Mammary epithelial cell (primary cell): ENCODE measurements at regions of chr10 and their contacts with region 1.

Region 1: GRCh38 chr10:110871298-110872084 is at the start of gene PDCD4:
- DNase-seq: peak; percentile 96
- H3K4me3 ChIP-seq: peak within 1 kb of the TSS; percentile 85 to 93 (median 92)
- H3K27ac ChIP-seq: peak within 1 kb of the TSS; percentile 88
- H3K4me1 ChIP-seq: peaks cover 4% of the 10 kb centered on the region
- H3K27me3 ChIP-seq: no peaks in the 10 kb centered on the region
- CTCF ChIP-seq: no peak
- total RNA-seq, gene PDCD4: 123 to 133 TPM

Region 2: GRCh38 chr10:110304780-110305421 is 566.6 kb before region 1 on chr10 and contains the start of gene SMNDC1:
- CTCF ChIA-PET with region 1: interaction called, 3 read pairs
- dilution Hi-C with region 1: no loop called
- in situ Hi-C with region 1: loop called in 1 of 2 experiments (anchors 25 kb)
- intact Hi-C with region 1: loop called (anchors 5 kb)
- DNase-seq: peak; percentile 96
- H3K4me3 ChIP-seq: peak within 1 kb of the TSS; percentile 69 to 97 (median 95)
- H3K27ac ChIP-seq: peak within 1 kb of the TSS; percentile 86
- H3K4me1 ChIP-seq: peaks cover 19% of the 10 kb centered on the region
- H3K27me3 ChIP-seq: no peaks in the 10 kb centered on the region
- CTCF ChIP-seq: no peak
- total RNA-seq, gene SMNDC1: 6.5 to 42.8 TPM

Region 3: GRCh38 chr10:110497438-110498086 is 373.9 kb before region 1 on chr10 and contains the start of gene DUSP5:
- CTCF ChIA-PET with region 1: no interaction called
- dilution Hi-C with region 1: no loop called
- in situ Hi-C with region 1: no loop called
- intact Hi-C with region 1: loop called (anchors 10 kb)
- DNase-seq: peak; percentile 96
- H3K4me3 ChIP-seq: peak within 1 kb of the TSS; percentile 80 to 90 (median 82)
- H3K27ac ChIP-seq: peak within 1 kb of the TSS; percentile 92
- H3K4me1 ChIP-seq: peaks cover 49% of the 10 kb centered on the region
- H3K27me3 ChIP-seq: no peaks in the 10 kb centered on the region
- CTCF ChIP-seq: no peak
- total RNA-seq, gene DUSP5: 18.0 to 107 TPM

Region 4: DNA sequence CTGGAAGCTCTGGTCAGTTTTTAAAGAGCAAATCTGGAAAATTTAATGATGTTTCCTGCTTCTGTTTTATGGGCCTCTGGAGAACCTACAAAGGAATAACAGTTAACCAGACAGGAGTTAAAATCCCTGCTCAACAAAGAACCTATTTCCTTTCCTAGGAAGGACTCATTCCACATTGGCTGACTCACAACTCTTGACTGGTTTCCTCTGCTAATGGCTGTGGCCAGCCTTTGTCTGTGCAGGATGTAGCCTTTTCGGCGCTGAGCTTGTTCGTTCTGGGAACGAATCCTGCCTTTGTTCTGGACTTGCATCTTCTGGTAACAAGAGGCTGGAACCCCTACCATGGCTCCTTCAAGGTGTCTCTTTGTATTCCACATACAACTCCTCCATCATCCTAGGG is 112.6 kb before region 1 on chr10:
- CTCF ChIA-PET with region 1: no interaction called
- dilution Hi-C with region 1: no loop called
- in situ Hi-C with region 1: loop called in 1 of 2 experiments (anchors 10 kb)
- intact Hi-C with region 1: no loop called
- DNase-seq: peak; percentile 57
- H3K4me3 ChIP-seq: no peak overlapping the region
- H3K27ac ChIP-seq: no peak overlapping the region
- H3K4me1 ChIP-seq: peaks cover 13% of the 10 kb centered on the region
- H3K27me3 ChIP-seq: no peaks in the 10 kb centered on the region
- CTCF ChIP-seq: no peak

Region 5: DNA sequence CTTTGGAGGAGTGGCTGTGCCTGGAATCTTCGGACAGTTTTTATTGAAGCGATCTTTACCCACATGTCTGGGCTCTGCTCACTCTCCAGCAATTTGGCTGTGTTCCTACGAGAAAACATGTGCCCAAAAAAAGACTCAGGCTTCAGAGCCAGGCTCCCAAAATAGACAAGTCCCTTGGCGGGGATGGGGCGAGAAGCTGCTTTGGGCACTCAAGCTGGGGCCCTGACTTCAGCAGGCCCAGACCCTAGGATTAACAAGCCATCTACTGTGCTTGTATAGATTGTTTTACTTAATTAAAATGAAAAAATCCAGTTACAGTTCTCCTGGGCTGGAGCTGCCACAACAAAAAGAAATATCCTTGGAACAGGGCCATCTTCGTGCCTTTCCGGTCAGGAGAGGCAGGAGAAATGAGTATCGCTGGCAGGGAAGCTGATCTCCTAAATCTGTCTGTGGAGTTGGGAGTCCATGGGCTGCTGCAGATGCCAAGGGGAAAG is 51.1 kb before region 1 on chr10:
- CTCF ChIA-PET with region 1: no interaction called
- dilution Hi-C with region 1: no loop called
- in situ Hi-C with region 1: no loop called
- intact Hi-C with region 1: loop called (anchors 5 kb)
- DNase-seq: no peak
- H3K4me3 ChIP-seq: no peak overlapping the region
- H3K27ac ChIP-seq: no peak overlapping the region
- H3K4me1 ChIP-seq: no peaks in the 10 kb centered on the region
- H3K27me3 ChIP-seq: no peaks in the 10 kb centered on the region
- CTCF ChIP-seq: no peak

Region 6: DNA sequence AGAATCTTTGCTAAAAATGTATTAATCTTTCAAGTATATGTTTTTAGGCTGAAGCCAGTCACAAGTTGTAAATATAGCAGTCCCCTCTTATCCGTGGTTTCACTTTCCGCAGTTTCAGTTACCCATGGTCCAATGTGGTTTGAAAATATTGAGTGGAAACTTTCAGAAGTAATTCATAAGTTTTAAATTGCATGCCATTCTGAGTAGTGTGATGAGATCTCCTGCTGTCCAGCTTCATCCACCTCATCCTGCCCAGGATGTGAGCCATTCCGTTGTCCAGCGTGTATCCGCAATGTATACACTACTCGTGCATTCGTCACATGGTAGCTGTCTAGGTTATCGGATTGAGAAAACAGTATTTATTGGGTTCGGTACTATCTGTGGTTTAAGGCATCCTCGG is 12.4 kb after region 1 on chr10:
- CTCF ChIA-PET with region 1: no interaction called
- dilution Hi-C with region 1: no loop called
- in situ Hi-C with region 1: no loop called
- intact Hi-C with region 1: no loop called
- DNase-seq: no peak
- H3K4me3 ChIP-seq: no peak overlapping the region
- H3K27ac ChIP-seq: no peak overlapping the region
- H3K4me1 ChIP-seq: no peaks in the 10 kb centered on the region
- H3K27me3 ChIP-seq: no peaks in the 10 kb centered on the region
- CTCF ChIP-seq: no peak

Region 7: GRCh38 chr10:110918643-110919363 is 47.3 kb after region 1 on chr10 and contains the start of gene BBIP1:
- CTCF ChIA-PET with region 1: no interaction called
- dilution Hi-C with region 1: no loop called
- in situ Hi-C with region 1: no loop called
- intact Hi-C with region 1: loop called (anchors 2 kb)
- DNase-seq: peak; percentile 100
- H3K4me3 ChIP-seq: peak within 1 kb of the TSS; percentile 93 to 95 (median 94)
- H3K27ac ChIP-seq: peak within 1 kb of the TSS; percentile 97
- H3K4me1 ChIP-seq: peaks cover 5% of the 10 kb centered on the region
- H3K27me3 ChIP-seq: no peaks in the 10 kb centered on the region
- CTCF ChIP-seq: no peak
- total RNA-seq, gene BBIP1: 9.3 to 25.0 TPM

Region 8: GRCh38 chr10:111004016-111004415 is 132.5 kb after region 1 on chr10:
- CTCF ChIA-PET with region 1: no interaction called
- dilution Hi-C with region 1: no loop called
- in situ Hi-C with region 1: no loop called
- intact Hi-C with region 1: no loop called
- DNase-seq: peak; percentile 35
- H3K4me3 ChIP-seq: no peak overlapping the region
- H3K27ac ChIP-seq: no peak overlapping the region
- H3K4me1 ChIP-seq: no peaks in the 10 kb centered on the region
- H3K27me3 ChIP-seq: no peaks in the 10 kb centered on the region
- CTCF ChIP-seq: no peak